ENCODE measurements at regions of chr2 and their contacts with region 1.

Region 1: DNA sequence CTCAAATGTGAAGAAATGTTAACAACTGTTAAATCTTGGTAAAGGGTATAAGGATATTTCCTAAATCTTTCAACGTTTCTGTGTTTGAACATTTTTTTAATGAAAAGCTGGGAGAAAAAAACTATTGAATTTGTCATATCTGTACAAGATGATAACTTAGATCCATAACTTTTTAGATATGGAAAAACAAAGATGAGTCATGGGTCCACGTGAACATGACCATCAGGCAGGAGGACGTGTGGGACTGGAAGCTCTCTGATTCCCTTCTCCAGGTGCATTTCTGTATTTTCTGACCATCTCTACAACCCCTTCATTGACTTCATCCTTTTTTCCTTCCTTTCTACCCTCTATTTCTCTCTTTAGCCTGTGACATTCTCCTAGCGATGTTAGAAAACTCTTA is 141.6 kb downstream of the DHRS9 start:
- DNase-seq: no peak
- ATAC-seq: no peak
- H3K4me3 Mint-ChIP-seq: no peak overlapping the region
- H3K27ac Mint-ChIP-seq: no peak overlapping the region
- H3K4me1 Mint-ChIP-seq: no peaks in the 10 kb centered on the region
- H3K27me3 Mint-ChIP-seq: no peaks in the 10 kb centered on the region
- CTCF ChIP-seq: no peak

Region 2: DNA sequence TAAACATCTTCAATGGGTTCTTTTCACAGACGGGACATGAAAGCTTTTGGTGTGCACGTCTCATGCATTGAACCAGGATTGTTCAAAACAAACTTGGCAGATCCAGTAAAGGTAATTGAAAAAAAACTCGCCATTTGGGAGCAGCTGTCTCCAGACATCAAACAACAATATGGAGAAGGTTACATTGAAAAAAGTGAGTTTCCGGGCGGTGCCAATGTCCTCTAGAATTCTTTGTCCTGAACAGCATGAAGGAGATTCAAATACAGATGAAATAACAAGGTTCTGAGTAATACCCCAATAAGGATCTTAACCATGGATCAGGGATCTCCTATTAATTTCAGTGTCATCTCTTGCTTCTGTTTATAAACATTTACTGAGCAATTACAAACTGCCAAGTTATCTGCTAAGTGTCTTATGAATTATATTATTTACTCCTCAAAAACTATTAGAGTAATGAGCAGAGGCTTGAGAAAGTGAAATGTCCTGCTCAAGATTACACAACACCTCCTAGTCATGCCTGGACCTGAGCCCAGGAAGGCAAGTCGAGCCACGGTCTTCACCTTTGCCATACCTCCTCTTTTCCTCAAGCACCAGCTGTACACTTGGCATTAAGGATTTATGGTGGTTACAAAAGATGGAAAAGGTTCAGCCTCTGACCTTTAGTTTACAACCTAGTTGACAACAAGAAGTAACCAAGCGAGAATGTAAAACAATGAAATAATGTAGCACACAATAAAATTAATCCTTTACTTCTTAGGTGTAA is 119.0 kb before region 1 on chr2:
- CTCF ChIA-PET with region 1: no interaction called
- POLR2A ChIA-PET with region 1: no interaction called
- DNase-seq: no peak
- ATAC-seq: no peak
- H3K4me3 Mint-ChIP-seq: no peak overlapping the region
- H3K27ac Mint-ChIP-seq: no peak overlapping the region
- H3K4me1 Mint-ChIP-seq: peaks cover 8% of the 10 kb centered on the region
- H3K27me3 Mint-ChIP-seq: peaks cover 5% of the 10 kb centered on the region
- CTCF ChIP-seq: no peak

Region 3: DNA sequence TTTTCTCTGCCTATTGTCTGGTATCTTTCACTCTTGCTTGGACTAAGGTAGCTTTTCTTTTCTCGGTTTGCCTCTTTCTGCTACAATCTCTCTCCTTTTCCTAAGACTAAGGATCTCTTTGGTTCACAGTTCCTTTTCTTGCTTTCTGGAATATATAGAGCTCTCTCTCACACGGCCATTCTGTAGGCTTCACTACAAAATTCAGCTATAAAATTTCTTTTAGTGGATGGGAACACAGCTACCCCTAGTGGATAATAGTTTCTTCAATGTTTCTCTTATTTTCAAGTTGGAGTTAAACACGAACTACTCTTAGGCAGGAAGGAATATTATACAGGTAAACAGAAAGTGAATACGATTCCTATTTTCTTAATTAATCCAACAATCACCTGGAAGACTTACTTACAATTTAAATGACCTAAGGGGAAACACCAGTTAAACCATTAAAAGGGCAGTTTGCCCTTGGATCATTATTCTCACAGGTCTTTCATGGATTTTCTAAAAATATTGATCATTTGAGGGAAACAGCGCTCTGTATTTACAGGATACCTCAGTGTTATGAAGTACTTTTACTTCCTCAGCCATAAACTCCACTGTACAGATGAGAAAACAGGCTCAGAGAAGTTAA is 10.9 kb after region 1 on chr2:
- CTCF ChIA-PET with region 1: interaction called, 20 read pairs
- POLR2A ChIA-PET with region 1: no interaction called
- DNase-seq: no peak
- ATAC-seq: peak; percentile 66
- H3K4me3 Mint-ChIP-seq: no peak overlapping the region
- H3K27ac Mint-ChIP-seq: no peak overlapping the region
- H3K4me1 Mint-ChIP-seq: no peaks in the 10 kb centered on the region
- H3K27me3 Mint-ChIP-seq: no peaks in the 10 kb centered on the region
- CTCF ChIP-seq: no peak

Region 4: GRCh38 chr2:169384816-169385215 is 173.9 kb after region 1 on chr2:
- CTCF ChIA-PET with region 1: no interaction called
- POLR2A ChIA-PET with region 1: no interaction called
- DNase-seq: no peak
- ATAC-seq: no peak
- H3K4me3 Mint-ChIP-seq: no peak overlapping the region
- H3K27ac Mint-ChIP-seq: no peak overlapping the region
- H3K4me1 Mint-ChIP-seq: no peaks in the 10 kb centered on the region
- H3K27me3 Mint-ChIP-seq: peaks cover 5% of the 10 kb centered on the region; the same call in 1 of the 2 replicates
- CTCF ChIP-seq: no peak

Measured in WTC11 (cell line).